ENCODE measurements at regions of chr3 and their contacts with region 1.

Region 1: DNA sequence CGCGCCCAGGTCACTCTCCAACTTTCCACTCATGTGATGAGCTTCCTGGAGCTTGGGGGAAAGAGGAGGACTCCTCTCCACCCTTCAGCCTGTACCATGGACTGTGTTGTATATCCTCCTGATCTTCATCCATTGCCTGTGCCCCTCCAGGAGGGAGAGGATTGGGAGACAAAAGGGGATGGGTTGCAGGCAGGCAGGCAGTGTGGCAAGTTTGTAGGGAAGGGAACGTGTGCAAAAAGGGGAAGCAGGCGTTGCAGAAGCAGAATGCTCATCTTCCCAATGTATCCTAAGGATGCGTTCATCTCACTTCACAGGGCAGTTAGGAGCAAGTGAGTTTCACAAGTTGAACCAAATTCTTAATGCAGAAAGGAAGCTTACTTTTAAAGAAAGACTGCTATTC is 28.1 kb upstream of the GHSR start:
- DNase-seq: no peak
- H3K4me3 ChIP-seq: peak overlapping the region in 1 of 4 donors; percentile 59
- H3K27ac ChIP-seq: peak overlapping the region in 1 of 5 donors; percentile 39
- H3K4me1 ChIP-seq: no peaks in the 10 kb centered on the region
- H3K27me3 ChIP-seq: no peaks in the 10 kb centered on the region
- CTCF ChIP-seq: no peak
- POLR2A ChIP-seq: no peak

Region 2: GRCh38 chr3:172595641-172596393 is 119.5 kb after region 1 on chr3:
- intact Hi-C with region 1: loop called in 1 of 2 experiments (anchors 10 kb)
- DNase-seq: peak in 4 of 7 donors; percentile 39 to 68 (median 45)
- H3K4me3 ChIP-seq: peak overlapping the region in 1 of 4 donors; percentile 51
- H3K27ac ChIP-seq: peak overlapping the region; percentile 43 to 72 (median 67)
- H3K4me1 ChIP-seq: peaks cover 14 to 18% of the 10 kb centered on the region in 2 donors
- H3K27me3 ChIP-seq: no peaks in the 10 kb centered on the region
- CTCF ChIP-seq: peak; percentile 51 to 87 (median 78)
- POLR2A ChIP-seq: no peak

Measured in adrenal gland (tissue), 19 donors.